ENCODE measurements at regions of chr2 and their contacts with region 1.

Region 1: DNA sequence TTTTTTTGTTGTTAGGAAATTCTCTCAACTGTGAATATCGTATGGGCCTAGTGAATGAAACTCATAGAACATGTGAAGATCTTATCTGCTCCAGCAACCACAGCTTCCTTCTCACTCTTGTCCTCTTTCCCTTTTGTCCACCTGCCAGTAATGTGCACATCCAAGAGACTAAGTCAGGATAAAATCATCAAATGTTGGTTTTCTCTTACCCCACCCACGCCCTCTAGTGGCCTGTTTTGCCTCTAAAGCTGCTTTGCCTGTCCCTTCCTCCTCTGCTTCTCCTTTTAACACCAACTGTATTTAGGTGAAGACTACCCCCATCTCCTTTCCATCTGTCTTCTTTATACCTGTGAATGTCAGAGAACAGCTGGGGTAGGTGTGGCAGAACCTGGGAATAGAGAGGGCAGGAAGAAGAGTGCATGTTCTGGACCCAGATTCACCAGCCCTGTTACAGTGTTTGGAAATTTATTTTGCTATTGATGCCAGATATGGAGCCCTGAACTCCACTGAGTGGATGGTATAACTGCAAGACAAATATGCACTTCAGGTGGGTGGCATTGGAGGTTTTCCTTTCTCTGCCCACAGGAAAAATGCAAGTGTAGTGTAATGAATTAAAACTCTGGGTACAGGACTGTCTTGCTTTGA is 8.4 kb upstream of the MGAT5 start:
- DNase-seq: no peak
- ATAC-seq: peak; percentile 65
- H3K4me3 ChIP-seq: no peak overlapping the region; the same call in 1 of the 2 replicates
- H3K27ac ChIP-seq: peak overlapping the region; percentile 54
- H3K4me1 ChIP-seq: peaks cover 66% of the 10 kb centered on the region
- H3K27me3 ChIP-seq: no peaks in the 10 kb centered on the region
- CTCF ChIP-seq: peak; percentile 78 to 86 (median 80)
- EP300 ChIP-seq: no peak
- POLR2A ChIP-seq: no peak
- RAD21 ChIP-seq: peak; percentile 75

Region 2: GRCh38 chr2:134127496-134127895 is 118.0 kb before region 1 on chr2:
- CTCF ChIA-PET with region 1: interaction called, 173 read pairs
- POLR2A ChIA-PET with region 1: interaction called, 3 read pairs
- RAD21 ChIA-PET with region 1: interaction called, 8 read pairs
- SMC1A ChIA-PET with region 1: interaction called, 12 read pairs
- in situ Hi-C with region 1: no loop called
- intact Hi-C with region 1: no loop called
- DNase-seq: no peak
- ATAC-seq: peak; percentile 65
- H3K4me3 ChIP-seq: peak overlapping the region; percentile 54
- H3K27ac ChIP-seq: 0 out of 2 replicates have a peak overlapping the region, but pooled peaks have one; percentile 17
- H3K4me1 ChIP-seq: peaks cover 32% of the 10 kb centered on the region
- H3K27me3 ChIP-seq: no peaks in the 10 kb centered on the region
- CTCF ChIP-seq: no peak
- EP300 ChIP-seq: no peak
- POLR2A ChIP-seq: peak; percentile 35; the same call in 1 of the 2 replicates
- RAD21 ChIP-seq: no peak

Region 3: DNA sequence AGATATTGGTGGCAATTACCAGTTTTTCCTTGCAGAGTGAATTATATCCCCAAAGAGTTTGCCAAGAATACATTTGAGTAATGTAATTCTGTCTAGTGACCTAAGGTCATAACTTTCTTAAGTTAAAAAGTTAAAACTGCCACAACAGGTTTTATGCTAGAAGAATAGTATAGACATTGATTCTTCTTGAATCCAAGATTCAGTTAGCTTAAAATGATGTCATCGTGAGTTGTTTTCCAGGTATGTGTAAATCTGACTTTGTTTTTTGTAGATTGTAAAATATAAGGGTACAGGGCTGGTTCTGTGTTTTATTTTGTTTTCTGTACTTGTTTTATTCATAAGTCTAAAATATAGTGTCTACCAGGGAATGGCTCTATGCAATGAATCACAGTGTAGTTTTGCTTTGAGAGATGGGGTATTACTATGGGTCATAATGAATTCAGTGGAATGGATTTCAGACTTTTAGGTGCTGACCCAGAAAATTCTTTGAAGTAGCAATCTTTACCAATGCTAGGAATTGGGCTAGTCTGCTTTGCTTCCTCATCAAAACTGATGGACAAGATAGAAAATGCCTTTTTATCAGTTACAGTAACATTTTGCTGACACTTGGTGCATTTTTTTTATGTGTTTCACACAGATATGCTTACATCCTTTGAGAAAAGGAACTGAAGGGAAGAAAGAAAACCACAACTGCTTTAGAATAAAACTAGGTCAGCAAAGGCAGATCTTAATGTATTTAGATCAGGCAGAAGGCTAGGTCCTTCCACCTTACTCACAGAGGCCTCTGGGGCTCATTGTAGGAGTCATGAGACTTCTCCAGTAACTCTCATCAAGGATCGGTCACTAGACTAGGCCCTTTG is 12.4 kb before region 1 on chr2:
- CTCF ChIA-PET with region 1: interaction called, 45 read pairs
- POLR2A ChIA-PET with region 1: interaction called, 4 read pairs
- RAD21 ChIA-PET with region 1: interaction called, 5 read pairs
- SMC1A ChIA-PET with region 1: interaction called, 20 read pairs
- in situ Hi-C with region 1: no loop called
- intact Hi-C with region 1: loop called (anchors 1 kb)
- DNase-seq: no peak
- ATAC-seq: peak; percentile 59
- H3K4me3 ChIP-seq: peak overlapping the region; percentile 19
- H3K27ac ChIP-seq: peak overlapping the region; percentile 83
- H3K4me1 ChIP-seq: peaks cover 72% of the 10 kb centered on the region
- H3K27me3 ChIP-seq: no peaks in the 10 kb centered on the region
- CTCF ChIP-seq: 0 out of 6 replicates have a peak, but pooled peaks of 2 of the 3 experiments have one; percentile 6 to 17
- EP300 ChIP-seq: 0 out of 4 replicates have a peak, but pooled peaks have one; percentile 4 to 22
- POLR2A ChIP-seq: no peak
- RAD21 ChIP-seq: no peak

Region 4: DNA sequence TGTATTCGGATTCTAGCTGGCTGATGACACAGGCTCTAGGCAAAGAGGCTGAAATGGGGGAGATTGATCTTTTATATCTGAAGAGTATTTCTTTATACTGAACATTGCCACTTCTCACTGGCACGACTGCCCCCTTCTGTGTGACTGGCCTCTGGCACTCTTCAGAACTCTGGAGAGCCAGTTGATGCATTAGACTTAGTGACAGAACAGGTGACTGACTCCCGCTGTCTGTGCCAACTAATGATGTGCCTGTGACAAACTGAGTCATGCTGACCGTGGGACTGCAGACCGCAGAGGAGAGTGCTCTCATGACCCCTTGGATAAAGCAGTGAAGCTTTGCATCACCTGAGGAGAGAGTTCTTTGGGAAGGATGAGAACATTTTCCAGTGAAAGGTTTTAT is 22.8 kb after region 1 on chr2:
- CTCF ChIA-PET with region 1: interaction called, 29 read pairs
- POLR2A ChIA-PET with region 1: no interaction called
- RAD21 ChIA-PET with region 1: interaction called, 17 read pairs
- SMC1A ChIA-PET with region 1: interaction called, 33 read pairs
- in situ Hi-C with region 1: no loop called
- intact Hi-C with region 1: no loop called
- DNase-seq: no peak
- ATAC-seq: no peak
- H3K4me3 ChIP-seq: no peak overlapping the region
- H3K27ac ChIP-seq: no peak overlapping the region
- H3K4me1 ChIP-seq: peaks cover 29% of the 10 kb centered on the region
- H3K27me3 ChIP-seq: no peaks in the 10 kb centered on the region
- CTCF ChIP-seq: no peak
- EP300 ChIP-seq: no peak
- POLR2A ChIP-seq: no peak
- RAD21 ChIP-seq: no peak

Region 5: GRCh38 chr2:134282629-134283400 is 37.4 kb after region 1 on chr2:
- CTCF ChIA-PET with region 1: interaction called, 15 read pairs
- POLR2A ChIA-PET with region 1: interaction called, 8 read pairs
- RAD21 ChIA-PET with region 1: interaction called, 8 read pairs
- SMC1A ChIA-PET with region 1: interaction called, 14 read pairs
- in situ Hi-C with region 1: no loop called
- intact Hi-C with region 1: no loop called
- DNase-seq: peak; percentile 96
- ATAC-seq: peak; percentile 91
- H3K4me3 ChIP-seq: peak overlapping the region; percentile 47
- H3K27ac ChIP-seq: peak overlapping the region; percentile 95
- H3K4me1 ChIP-seq: peaks cover 87% of the 10 kb centered on the region
- H3K27me3 ChIP-seq: no peaks in the 10 kb centered on the region
- CTCF ChIP-seq: no peak
- EP300 ChIP-seq: peak; percentile 89 to 90
- POLR2A ChIP-seq: 0 out of 2 replicates have a peak, but pooled peaks have one; percentile 40
- RAD21 ChIP-seq: no peak